Naive thymus-derived CD4-positive, alpha-beta T cell (primary cell): ENCODE measurements at regions of chr6 and their contacts with region 1.

Region 1: DNA sequence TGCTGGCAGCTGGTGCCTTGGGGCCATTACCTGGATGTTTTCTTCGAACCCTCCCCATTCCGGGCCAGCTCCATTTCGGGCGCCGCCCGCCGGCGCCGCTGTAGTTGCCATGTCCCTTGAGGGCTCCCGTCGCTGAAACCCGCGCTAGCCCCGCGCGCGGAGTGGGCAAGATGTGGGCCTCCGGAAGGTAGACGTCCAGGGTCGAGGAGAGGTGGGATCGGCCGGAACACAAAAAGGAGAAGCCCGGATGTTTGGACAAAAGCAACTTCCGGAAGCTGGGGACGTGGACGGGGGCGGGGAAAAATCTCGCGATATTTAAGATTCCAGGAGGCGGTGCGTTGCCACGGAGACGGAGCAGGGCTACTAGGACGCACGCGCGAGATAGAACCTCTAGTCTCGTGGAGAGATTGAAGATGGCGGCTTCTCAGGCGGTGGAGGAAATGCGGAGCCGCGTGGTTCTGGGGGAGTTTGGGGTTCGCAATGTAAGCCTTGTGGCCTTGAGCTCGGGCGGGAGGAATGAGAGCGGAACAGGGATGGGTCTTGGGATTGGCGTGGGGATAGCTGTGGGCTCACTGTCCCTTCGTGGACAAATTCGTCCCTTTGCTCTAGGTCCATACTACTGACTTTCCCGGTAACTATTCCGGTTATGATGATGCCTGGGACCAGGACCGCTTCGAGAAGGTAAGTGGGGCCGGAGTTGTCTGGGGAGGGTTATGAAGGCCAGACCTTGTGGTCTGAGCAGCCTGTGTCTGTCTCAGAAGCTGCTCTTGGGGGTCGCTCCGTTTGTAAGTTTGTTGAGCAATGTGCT is at the starts of genes POLR1C and YIPF3:
- DNase-seq: peak; percentile 83 to 97 (median 96)
- ATAC-seq: peak; percentile 95
- H3K4me3 ChIP-seq: peak within 1 kb of the TSS; percentile 100
- H3K4me3 Mint-ChIP-seq: no peak within 1 kb of the TSS
- H3K27ac ChIP-seq: peak within 1 kb of the TSS; percentile 96
- H3K27ac Mint-ChIP-seq: no peak within 1 kb of the TSS
- H3K4me1 ChIP-seq: peaks cover 32 to 36% of the 10 kb centered on the region in 2 donors
- H3K4me1 Mint-ChIP-seq: peaks cover 8 to 36% (median 31%) of the 10 kb centered on the region in 7 donors
- H3K27me3 ChIP-seq: no peaks in the 10 kb centered on the region
- H3K27me3 Mint-ChIP-seq: no peaks in the 10 kb centered on the region
- total RNA-seq, gene POLR1C: 36.3 to 61.1 (median 40.9) TPM
- total RNA-seq, gene YIPF3: 54.4 to 75.9 (median 67.3) TPM

Region 2: GRCh38 chr6:43013843-43014433 is 503.0 kb before region 1 on chr6 and contains the starts of genes KLHDC3 and MEA1:
- CTCF ChIA-PET with region 1: no interaction called
- POLR2A ChIA-PET with region 1: no interaction called
- intact Hi-C with region 1: loop called (anchors 1 to 5 kb)
- DNase-seq: peak; percentile 83 to 100 (median 99)
- ATAC-seq: peak; percentile 98
- H3K4me3 ChIP-seq: peak within 1 kb of the TSS; percentile 73
- H3K4me3 Mint-ChIP-seq: peak within 1 kb of the TSS; percentile 85 to 99 (median 92)
- H3K27ac ChIP-seq: peak within 1 kb of the TSS; percentile 84
- H3K27ac Mint-ChIP-seq: peak within 1 kb of the TSS; percentile 82 to 97 (median 92)
- H3K4me1 ChIP-seq: peaks cover 20 to 31% of the 10 kb centered on the region in 2 donors
- H3K4me1 Mint-ChIP-seq: peaks cover 45 to 78% (median 58%) of the 10 kb centered on the region in 7 donors
- H3K27me3 ChIP-seq: no peaks in the 10 kb centered on the region
- H3K27me3 Mint-ChIP-seq: peaks cover 0 to 3% (median 0%) of the 10 kb centered on the region in 5 donors
- total RNA-seq, gene KLHDC3: 39.9 to 76.9 (median 67.4) TPM
- total RNA-seq, gene MEA1: 20.3 to 58.0 (median 32.7) TPM

Region 3: DNA sequence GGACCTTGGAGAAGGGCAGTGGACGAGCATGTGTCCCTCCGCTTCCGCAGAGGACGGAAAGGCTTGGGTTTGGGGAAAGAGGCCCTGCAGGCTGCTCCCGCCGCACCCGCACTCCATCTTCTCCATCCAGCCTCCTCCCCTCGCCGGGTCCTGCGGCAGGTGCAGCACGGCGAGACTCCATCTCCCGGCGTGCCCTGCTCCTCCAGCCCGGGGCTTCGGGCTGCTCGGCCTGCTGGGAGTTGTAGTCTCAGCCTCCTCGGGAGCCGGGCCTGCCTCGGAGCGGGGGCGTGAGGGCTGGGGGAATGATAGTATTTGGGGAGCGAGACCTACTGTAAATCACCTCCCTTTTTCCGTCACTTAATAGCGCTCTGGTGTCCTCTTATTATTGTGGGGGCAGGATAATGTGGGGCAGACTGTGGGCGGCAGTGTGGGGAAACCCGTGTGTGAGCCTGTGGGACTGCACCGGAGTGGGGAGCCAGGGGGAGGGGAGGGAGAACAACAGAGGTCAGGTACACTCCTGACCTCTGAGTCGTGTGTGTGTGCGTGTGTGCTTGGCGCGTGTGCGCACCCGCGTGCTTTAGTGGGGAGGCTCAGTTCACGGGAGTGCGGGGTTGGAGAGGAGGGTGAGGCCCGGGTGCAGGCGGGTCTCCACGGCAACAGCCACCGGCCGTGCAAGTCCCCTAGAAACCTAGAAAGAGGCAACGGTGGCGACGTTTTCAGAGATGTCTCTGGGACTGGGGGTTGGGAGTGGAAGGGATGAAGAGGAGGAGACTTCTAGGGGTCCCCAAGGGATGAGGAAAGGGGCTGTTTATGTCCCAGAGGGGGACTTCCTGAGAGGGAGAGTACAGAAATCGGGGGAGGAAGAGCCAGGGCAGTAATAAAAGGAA is 269.5 kb before region 1 on chr6:
- CTCF ChIA-PET with region 1: no interaction called
- POLR2A ChIA-PET with region 1: no interaction called
- intact Hi-C with region 1: loop called (anchors 1 kb)
- DNase-seq: peak; percentile 65 to 81 (median 78)
- ATAC-seq: peak; percentile 95
- H3K4me3 ChIP-seq: peak overlapping the region; percentile 84
- H3K4me3 Mint-ChIP-seq: peak overlapping the region in 9 of 10 donors; percentile 83 to 94 (median 88)
- H3K27ac ChIP-seq: peak overlapping the region; percentile 78
- H3K27ac Mint-ChIP-seq: peak overlapping the region; percentile 76 to 92 (median 89)
- H3K4me1 ChIP-seq: peaks cover 3 to 13% of the 10 kb centered on the region in 2 donors
- H3K4me1 Mint-ChIP-seq: peaks cover 11 to 26% (median 21%) of the 10 kb centered on the region in 7 donors
- H3K27me3 ChIP-seq: peaks cover 3 to 13% of the 10 kb centered on the region in 2 donors
- H3K27me3 Mint-ChIP-seq: peaks cover 7 to 33% (median 14%) of the 10 kb centered on the region in 5 donors

Region 4: DNA sequence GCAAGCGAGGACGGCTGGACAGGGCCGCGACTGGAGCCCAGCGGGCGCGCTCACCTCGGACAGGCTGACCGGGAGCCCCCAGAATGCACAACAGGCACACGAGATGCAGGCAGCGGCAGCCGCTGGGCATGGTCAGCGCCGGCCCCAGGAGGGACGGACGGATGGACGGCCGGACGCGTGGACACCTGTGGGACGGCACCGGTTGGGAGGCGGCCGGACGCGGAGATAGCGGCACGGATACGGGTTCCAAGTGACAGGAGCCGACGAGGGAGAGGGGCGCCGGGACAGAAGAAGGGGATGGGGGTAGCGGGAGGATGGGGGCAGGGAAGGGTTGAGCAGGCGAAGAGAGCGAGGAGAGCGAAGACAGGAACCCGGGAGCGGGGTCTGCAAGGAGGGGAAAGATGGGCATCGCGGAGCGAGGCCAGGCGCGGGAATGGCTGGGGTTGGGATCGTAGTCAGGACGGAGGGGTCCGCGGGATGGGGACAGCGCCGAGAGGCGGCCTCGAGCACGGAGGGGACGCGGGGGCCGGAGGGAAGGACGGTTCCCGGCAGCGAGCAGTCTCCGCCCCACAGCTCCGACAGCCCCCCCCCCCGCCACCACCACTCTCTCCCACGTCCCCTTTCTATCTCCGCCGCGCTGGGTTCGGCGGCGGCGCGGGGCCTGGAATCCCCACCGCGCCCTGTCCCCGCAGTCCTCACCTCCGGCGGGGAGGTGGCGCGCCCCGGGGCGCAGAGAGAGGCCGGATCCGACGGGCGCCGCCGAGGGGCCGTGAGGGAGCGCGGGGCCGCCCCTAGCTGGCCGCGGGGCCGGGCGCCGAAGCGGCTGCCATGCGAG is 62.0 kb before region 1 on chr6:
- CTCF ChIA-PET with region 1: no interaction called
- POLR2A ChIA-PET with region 1: interaction called, 3 read pairs
- intact Hi-C with region 1: loop called in 1 of 2 experiments (anchors 2 kb)
- DNase-seq: peak in 7 of 9 donors; percentile 28 to 42 (median 31)
- ATAC-seq: peak; percentile 61
- H3K4me3 ChIP-seq: peak overlapping the region; percentile 69
- H3K4me3 Mint-ChIP-seq: peak overlapping the region; percentile 71 to 92 (median 85)
- H3K27ac ChIP-seq: peak overlapping the region; percentile 63
- H3K27ac Mint-ChIP-seq: peak overlapping the region in 7 of 9 donors; percentile 34 to 91 (median 70)
- H3K4me1 ChIP-seq: peaks cover 6 to 7% of the 10 kb centered on the region in 2 donors
- H3K4me1 Mint-ChIP-seq: peaks cover 10 to 19% (median 12%) of the 10 kb centered on the region in 7 donors
- H3K27me3 ChIP-seq: no peaks in the 10 kb centered on the region
- H3K27me3 Mint-ChIP-seq: peaks cover 0 to 34% (median 0%) of the 10 kb centered on the region in 5 donors

Region 5: GRCh38 chr6:43506667-43507471 is 10.0 kb before region 1 on chr6:
- CTCF ChIA-PET with region 1: interaction called, 35 read pairs
- POLR2A ChIA-PET with region 1: interaction called, 23 read pairs
- intact Hi-C with region 1: loop called in 1 of 2 experiments (anchors 1 kb)
- DNase-seq: peak; percentile 61 to 82 (median 70)
- ATAC-seq: peak; percentile 84
- H3K4me3 ChIP-seq: no peak overlapping the region
- H3K4me3 Mint-ChIP-seq: peak overlapping the region in 1 of 10 donors; percentile 29
- H3K27ac ChIP-seq: no peak overlapping the region
- H3K27ac Mint-ChIP-seq: peak overlapping the region in 5 of 9 donors; percentile 24 to 69 (median 58)
- H3K4me1 ChIP-seq: peaks cover 0 to 4% of the 10 kb centered on the region in 2 donors
- H3K4me1 Mint-ChIP-seq: peaks cover 10 to 29% (median 20%) of the 10 kb centered on the region in 7 donors
- H3K27me3 ChIP-seq: peaks cover 0 to 9% of the 10 kb centered on the region in 2 donors
- H3K27me3 Mint-ChIP-seq: peaks cover 15 to 22% (median 19%) of the 10 kb centered on the region in 5 donors

Region 6: GRCh38 chr6:43575772-43576551 is 59.1 kb after region 1 on chr6 and contains the starts of genes POLH and XPO5:
- CTCF ChIA-PET with region 1: no interaction called
- POLR2A ChIA-PET with region 1: interaction called, 3 read pairs
- intact Hi-C with region 1: loop called (anchors 1 to 2 kb)
- DNase-seq: peak; percentile 83 to 94 (median 88)
- ATAC-seq: peak; percentile 99
- H3K4me3 ChIP-seq: peak within 1 kb of the TSS; percentile 77
- H3K4me3 Mint-ChIP-seq: peak within 1 kb of the TSS; percentile 90 to 100 (median 98)
- H3K27ac ChIP-seq: peak within 1 kb of the TSS; percentile 89
- H3K27ac Mint-ChIP-seq: peak within 1 kb of the TSS; percentile 78 to 94 (median 92)
- H3K4me1 ChIP-seq: peaks cover 20 to 21% of the 10 kb centered on the region in 2 donors
- H3K4me1 Mint-ChIP-seq: peaks cover 21 to 61% (median 40%) of the 10 kb centered on the region in 7 donors
- H3K27me3 ChIP-seq: no peaks in the 10 kb centered on the region
- H3K27me3 Mint-ChIP-seq: no peaks in the 10 kb centered on the region
- total RNA-seq, gene POLH: 9.1 to 65.6 (median 19.3) TPM
- total RNA-seq, gene XPO5: 35.0 to 107 (median 41.9) TPM

Region 7: GRCh38 chr6:43746613-43747102 is 229.8 kb after region 1 on chr6:
- CTCF ChIA-PET with region 1: no interaction called
- POLR2A ChIA-PET with region 1: no interaction called
- intact Hi-C with region 1: no loop called
- DNase-seq: no peak
- ATAC-seq: no peak
- H3K4me3 ChIP-seq: no peak overlapping the region
- H3K4me3 Mint-ChIP-seq: no peak overlapping the region
- H3K27ac ChIP-seq: no peak overlapping the region
- H3K27ac Mint-ChIP-seq: no peak overlapping the region
- H3K4me1 ChIP-seq: no peaks in the 10 kb centered on the region
- H3K4me1 Mint-ChIP-seq: peaks cover 0 to 3% (median 0%) of the 10 kb centered on the region in 7 donors
- H3K27me3 ChIP-seq: no peaks in the 10 kb centered on the region
- H3K27me3 Mint-ChIP-seq: peaks cover 0 to 20% (median 8%) of the 10 kb centered on the region in 5 donors